ENCODE measurements at regions of chr1 and their contacts with region 1.

Region 1: DNA sequence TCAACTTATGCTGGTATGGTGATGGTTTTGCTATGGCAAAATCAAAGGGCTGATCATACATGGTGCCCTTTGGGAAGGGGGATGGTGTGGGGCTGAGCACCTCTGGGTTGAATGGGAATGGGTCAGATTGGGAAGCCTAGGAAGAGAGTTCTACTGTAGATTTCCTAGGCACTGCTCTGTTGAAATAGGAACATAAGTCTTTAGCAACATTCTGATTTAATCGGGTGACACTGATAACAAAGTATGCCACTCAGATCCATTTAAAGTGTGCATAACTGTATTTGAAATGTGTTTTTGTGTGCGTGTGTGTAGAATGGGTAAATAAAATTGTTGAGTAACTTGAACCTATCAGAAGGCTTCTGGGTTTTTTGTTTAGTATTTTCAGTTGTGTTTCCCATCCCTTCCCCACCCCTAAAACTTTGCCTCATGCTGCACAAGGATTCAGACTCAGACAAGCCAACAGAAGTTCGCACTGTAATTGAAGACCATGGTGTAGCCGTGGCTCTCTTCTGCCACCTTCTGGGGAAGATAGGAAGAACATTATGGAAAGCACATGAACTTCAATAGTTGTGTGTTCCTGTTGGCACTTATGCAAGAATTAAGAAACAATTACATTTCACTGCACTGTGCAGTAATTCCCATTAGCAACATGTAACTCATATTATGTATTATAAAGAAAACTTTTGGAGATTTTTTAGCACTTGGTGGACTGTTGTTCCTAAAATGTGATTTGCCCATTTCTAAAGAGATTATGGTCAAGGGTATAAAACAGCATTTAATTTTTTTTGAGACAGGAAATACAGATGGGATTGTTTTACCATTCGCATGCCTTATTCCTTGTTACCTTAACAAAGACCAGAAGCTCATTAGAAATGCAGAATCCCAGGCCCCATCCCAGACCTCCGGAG is 10.9 kb upstream of the C4BPB start:
- DNase-seq: peak; percentile 60
- CTCF ChIP-seq: peak; percentile 83

Region 2: GRCh38 chr1:207404849-207405525 is 327.3 kb after region 1 on chr1:
- in situ Hi-C with region 1: loop called (anchors 10 kb)
- DNase-seq: peak; percentile 66
- CTCF ChIP-seq: peak; percentile 76

Region 3: GRCh38 chr1:207499573-207499972 is 421.8 kb after region 1 on chr1:
- in situ Hi-C with region 1: loop called (anchors 25 kb)
- DNase-seq: peak; percentile 58
- CTCF ChIP-seq: peak; percentile 72

Measured in GM13977 (cell line).